Heart right ventricle (tissue), 16 donors: ENCODE measurements at regions of chr6 and their contacts with region 1.

Region 1: DNA sequence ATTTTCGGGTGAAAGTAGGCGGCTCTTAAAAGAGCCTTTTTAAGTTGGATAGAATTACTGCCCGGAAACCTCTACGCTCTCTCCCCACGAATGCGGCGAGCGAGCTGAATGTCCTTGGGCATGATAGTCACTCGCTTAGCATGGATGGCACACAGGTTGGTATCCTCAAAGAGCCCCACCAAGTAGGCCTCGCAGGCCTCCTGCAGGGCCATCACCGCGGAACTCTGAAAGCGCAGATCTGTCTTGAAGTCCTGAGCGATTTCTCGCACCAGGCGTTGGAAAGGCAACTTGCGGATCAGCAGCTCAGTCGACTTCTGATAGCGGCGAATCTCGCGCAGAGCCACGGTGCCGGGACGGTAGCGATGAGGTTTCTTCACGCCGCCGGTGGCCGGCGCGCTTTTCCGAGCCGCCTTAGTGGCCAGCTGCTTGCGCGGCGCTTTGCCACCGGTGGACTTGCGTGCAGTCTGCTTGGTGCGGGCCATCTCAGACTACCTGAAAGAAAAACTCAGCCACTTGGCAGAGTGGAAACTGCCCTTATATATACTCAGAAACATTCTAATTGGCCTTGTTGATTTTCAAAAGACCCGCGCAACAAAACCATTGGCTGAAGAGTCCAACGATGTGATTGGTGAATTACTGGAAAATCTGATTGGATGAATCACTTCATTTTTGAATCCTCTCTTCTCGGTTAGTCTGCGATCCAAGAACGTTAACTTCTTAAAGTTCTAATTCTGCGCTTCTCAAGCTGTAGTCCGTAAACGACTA is 93.9 kb upstream of the BTN3A2 start:
- DNase-seq: peak; percentile 29 to 82
- ATAC-seq: peak in 7 of 8 donors; percentile 46 to 66 (median 61)
- H3K4me3 ChIP-seq: peak overlapping the region in 9 of 10 donors; percentile 31 to 64 (median 49)
- H3K27ac ChIP-seq: peak overlapping the region in 6 of 10 donors; percentile 45 to 90 (median 70)
- H3K4me1 ChIP-seq: peaks cover 0 to 41% (median 17%) of the 10 kb centered on the region in 9 donors
- H3K27me3 ChIP-seq: peaks cover 10 to 79% (median 60%) of the 10 kb centered on the region in 7 donors
- CTCF ChIP-seq: no peak

Region 2: GRCh38 chr6:25874822-25875562 is 396.1 kb before region 1 on chr6:
- intact Hi-C with region 1: no loop called
- DNase-seq: no peak
- ATAC-seq: no peak
- H3K4me3 ChIP-seq: no peak overlapping the region
- H3K27ac ChIP-seq: no peak overlapping the region
- H3K4me1 ChIP-seq: no peaks in the 10 kb centered on the region
- H3K27me3 ChIP-seq: peaks cover 0 to 14% (median 0%) of the 10 kb centered on the region in 7 donors
- CTCF ChIP-seq: no peak

Region 3: DNA sequence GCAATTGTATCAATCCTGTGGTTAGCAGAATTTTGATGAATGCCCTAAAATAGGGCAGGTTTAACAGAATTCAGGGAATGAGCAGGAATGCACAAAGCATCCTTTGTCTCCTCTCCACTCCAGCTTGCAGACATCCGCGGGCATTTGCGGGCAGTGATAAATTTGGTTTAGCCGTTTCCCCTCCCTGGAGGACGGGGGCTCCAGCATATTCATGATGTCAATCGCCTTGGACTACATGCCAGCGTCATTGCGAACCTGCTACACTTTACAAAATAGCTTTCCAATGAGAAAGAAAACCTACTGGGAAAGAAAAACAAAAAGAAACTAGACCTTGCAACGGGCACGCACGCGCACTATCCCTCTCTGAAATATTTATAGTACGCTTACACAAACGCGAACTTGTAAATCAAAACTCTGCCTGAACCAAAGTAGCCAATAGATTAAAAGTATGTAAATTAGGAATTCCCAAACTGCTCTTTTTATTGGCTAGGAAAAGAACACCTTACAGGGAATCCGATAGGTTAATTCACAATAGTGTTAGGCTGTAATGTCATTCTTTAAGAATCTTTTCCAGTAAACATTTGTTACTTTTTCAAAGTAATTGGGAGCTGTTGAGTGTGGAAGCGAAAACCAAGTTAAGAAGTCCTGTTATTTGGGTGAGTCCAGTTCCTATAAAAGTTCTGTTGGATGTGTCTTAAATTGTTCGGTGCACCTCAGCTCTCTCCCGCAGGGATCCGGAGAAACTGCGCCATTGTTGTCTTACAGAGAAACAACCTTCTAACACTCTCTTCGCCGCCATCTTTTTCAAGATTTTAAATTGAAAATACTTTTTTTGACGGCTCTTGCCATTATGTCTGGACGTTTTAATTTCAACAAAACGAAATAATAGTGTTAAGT is 47.2 kb before region 1 on chr6:
- intact Hi-C with region 1: loop called in 1 of 10 experiments (anchors 5 kb)
- DNase-seq: peak in 1 of 2 donors; percentile 72
- ATAC-seq: peak; percentile 82 to 95 (median 92)
- H3K4me3 ChIP-seq: peak overlapping the region; percentile 7 to 65 (median 54)
- H3K27ac ChIP-seq: peak overlapping the region; percentile 69 to 93 (median 87)
- H3K4me1 ChIP-seq: peaks cover 0 to 20% (median 7%) of the 10 kb centered on the region in 9 donors
- H3K27me3 ChIP-seq: peaks cover 0 to 53% (median 12%) of the 10 kb centered on the region in 7 donors
- CTCF ChIP-seq: no peak

Region 4: GRCh38 chr6:26234421-26235296 is 36.4 kb before region 1 on chr6:
- intact Hi-C with region 1: loop called in 1 of 10 experiments (anchors 5 kb)
- DNase-seq: peak in 1 of 2 donors; percentile 54
- ATAC-seq: peak; percentile 70 to 92 (median 84)
- H3K4me3 ChIP-seq: peak overlapping the region; percentile 0 to 67 (median 55)
- H3K27ac ChIP-seq: peak overlapping the region in 9 of 10 donors; percentile 7 to 92 (median 49)
- H3K4me1 ChIP-seq: peaks cover 0 to 48% (median 15%) of the 10 kb centered on the region in 9 donors
- H3K27me3 ChIP-seq: peaks cover 4 to 88% (median 70%) of the 10 kb centered on the region in 7 donors
- CTCF ChIP-seq: no peak

Region 5: GRCh38 chr6:26249957-26250697 is 21.0 kb before region 1 on chr6:
- intact Hi-C with region 1: loop called in 1 of 10 experiments (anchors 2 kb)
- DNase-seq: peak; percentile 29 to 39
- ATAC-seq: peak; percentile 34 to 77 (median 66)
- H3K4me3 ChIP-seq: peak overlapping the region; percentile 8 to 62 (median 46)
- H3K27ac ChIP-seq: peak overlapping the region in 7 of 10 donors; percentile 13 to 78 (median 51)
- H3K4me1 ChIP-seq: peaks cover 0 to 41% (median 4%) of the 10 kb centered on the region in 9 donors
- H3K27me3 ChIP-seq: peaks cover 0 to 99% (median 71%) of the 10 kb centered on the region in 7 donors
- CTCF ChIP-seq: peak in 3 of 9 donors; percentile 14 to 29 (median 22)

Region 6: DNA sequence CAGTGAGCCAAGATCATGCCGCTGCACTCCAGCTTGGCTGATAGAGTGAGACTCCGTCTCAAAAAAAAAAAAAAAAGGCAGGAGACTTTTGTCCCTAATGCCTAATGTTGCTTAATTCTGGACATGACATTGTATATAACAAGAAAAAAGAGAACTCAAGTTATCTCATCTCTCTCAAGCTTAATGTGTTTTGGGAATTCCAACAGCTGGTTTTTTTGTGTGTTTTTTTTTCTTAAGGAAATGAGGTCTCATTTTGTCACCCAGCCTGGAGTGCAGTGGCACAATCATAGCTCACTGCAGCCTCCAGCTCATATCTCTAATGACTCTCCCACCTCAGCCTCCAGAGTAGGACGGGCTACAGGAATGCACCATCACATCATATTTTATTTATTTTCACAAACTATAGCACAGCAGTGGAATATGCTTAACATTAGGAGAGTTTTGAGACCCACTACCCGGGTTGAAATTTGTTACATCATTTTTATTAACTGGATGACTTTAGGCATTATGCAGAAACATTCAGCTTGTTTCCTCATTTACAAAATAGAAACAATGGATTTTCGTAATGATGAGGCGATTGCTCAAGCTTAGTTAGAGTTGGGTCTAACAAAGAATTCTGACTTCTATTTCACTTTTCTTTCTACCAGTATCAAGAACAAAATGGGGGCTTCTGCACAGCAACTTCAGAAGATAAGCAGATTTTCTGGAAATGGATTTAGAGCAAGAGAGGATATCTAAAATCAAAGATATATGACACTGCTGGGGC is 10.2 kb before region 1 on chr6:
- intact Hi-C with region 1: no loop called
- DNase-seq: no peak
- ATAC-seq: no peak
- H3K4me3 ChIP-seq: no peak overlapping the region
- H3K27ac ChIP-seq: peak overlapping the region in 1 of 10 donors; percentile 43
- H3K4me1 ChIP-seq: peaks cover 0 to 10% (median 0%) of the 10 kb centered on the region in 9 donors
- H3K27me3 ChIP-seq: peaks cover 0 to 72% (median 23%) of the 10 kb centered on the region in 7 donors
- CTCF ChIP-seq: no peak